Aorta (tissue), 5 donors: ENCODE measurements at regions of chr2 and their contacts with region 1.

Region 1: DNA sequence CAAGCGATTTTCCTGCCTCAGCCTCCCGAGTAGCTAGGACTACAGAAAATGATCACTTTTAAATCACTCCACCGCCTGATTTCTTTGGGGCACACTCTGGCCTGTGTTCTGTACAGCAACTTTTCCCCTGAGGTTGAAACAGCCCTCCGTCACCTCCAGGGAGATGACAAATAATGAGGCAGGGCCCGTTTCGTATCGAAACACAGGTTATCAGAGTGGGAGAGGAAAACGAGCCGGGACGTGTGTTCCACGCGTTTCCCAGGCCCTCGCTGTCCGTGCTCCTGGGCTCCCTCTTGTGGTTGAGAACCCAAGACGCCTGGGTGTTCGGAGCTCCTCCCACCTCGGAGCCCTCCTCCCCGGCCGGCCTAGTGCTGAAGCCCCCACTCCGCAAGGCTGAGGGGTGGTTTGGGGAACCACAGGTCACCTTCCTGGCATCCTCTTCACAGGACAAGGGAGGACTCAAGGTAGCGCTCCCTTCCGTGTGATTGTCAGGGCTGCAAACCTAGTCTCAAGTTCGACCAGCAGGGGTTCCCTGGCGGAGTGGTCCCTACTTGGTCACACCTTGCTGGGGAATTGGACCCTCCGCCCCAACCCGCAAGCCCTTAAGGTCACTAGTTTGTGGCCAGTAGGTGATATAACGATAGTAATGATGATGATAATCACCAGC is 12.8 kb downstream of the ATP6V1B1 start:
- DNase-seq: peak; percentile 85 to 93
- ATAC-seq: peak; percentile 92
- H3K4me3 ChIP-seq: no peak overlapping the region
- H3K27ac ChIP-seq: no peak overlapping the region
- H3K4me1 ChIP-seq: no peaks in the 10 kb centered on the region
- H3K27me3 ChIP-seq: no peaks in the 10 kb centered on the region

Region 2: GRCh38 chr2:70248181-70248847 is 700.2 kb before region 1 on chr2 and contains the start of gene TIA1:
- intact Hi-C with region 1: no loop called
- DNase-seq: peak; percentile 99
- ATAC-seq: peak; percentile 99
- H3K4me3 ChIP-seq: peak within 1 kb of the TSS; percentile 86
- H3K27ac ChIP-seq: peak within 1 kb of the TSS; percentile 91 to 93
- H3K4me1 ChIP-seq: peaks cover 0 to 5% of the 10 kb centered on the region in 2 donors
- H3K27me3 ChIP-seq: no peaks in the 10 kb centered on the region
- total RNA-seq, gene TIA1: 87.6 to 150 TPM

Region 3: GRCh38 chr2:70301344-70302194 is 646.9 kb before region 1 on chr2 and contains the start of gene FAM136A:
- intact Hi-C with region 1: loop called in 1 of 2 experiments (anchors 5 kb)
- DNase-seq: peak; percentile 92 to 97
- ATAC-seq: peak; percentile 98
- H3K4me3 ChIP-seq: peak within 1 kb of the TSS; percentile 68 to 70
- H3K27ac ChIP-seq: peak within 1 kb of the TSS in 1 of 2 donors; percentile 1
- H3K4me1 ChIP-seq: no peaks in the 10 kb centered on the region
- H3K27me3 ChIP-seq: no peaks in the 10 kb centered on the region
- total RNA-seq, gene FAM136A: 15.7 to 19.8 TPM

Region 4: GRCh38 chr2:70541481-70542020 is 406.9 kb before region 1 on chr2:
- intact Hi-C with region 1: no loop called
- DNase-seq: no peak
- ATAC-seq: no peak
- H3K4me3 ChIP-seq: no peak overlapping the region
- H3K27ac ChIP-seq: no peak overlapping the region
- H3K4me1 ChIP-seq: no peaks in the 10 kb centered on the region
- H3K27me3 ChIP-seq: no peaks in the 10 kb centered on the region

Region 5: GRCh38 chr2:70861777-70862625 is 86.5 kb before region 1 on chr2:
- intact Hi-C with region 1: loop called in 1 of 2 experiments (anchors 2 kb)
- DNase-seq: peak; percentile 82 to 91
- ATAC-seq: peak; percentile 85
- H3K4me3 ChIP-seq: no peak overlapping the region
- H3K27ac ChIP-seq: no peak overlapping the region
- H3K4me1 ChIP-seq: no peaks in the 10 kb centered on the region
- H3K27me3 ChIP-seq: no peaks in the 10 kb centered on the region

Region 6: DNA sequence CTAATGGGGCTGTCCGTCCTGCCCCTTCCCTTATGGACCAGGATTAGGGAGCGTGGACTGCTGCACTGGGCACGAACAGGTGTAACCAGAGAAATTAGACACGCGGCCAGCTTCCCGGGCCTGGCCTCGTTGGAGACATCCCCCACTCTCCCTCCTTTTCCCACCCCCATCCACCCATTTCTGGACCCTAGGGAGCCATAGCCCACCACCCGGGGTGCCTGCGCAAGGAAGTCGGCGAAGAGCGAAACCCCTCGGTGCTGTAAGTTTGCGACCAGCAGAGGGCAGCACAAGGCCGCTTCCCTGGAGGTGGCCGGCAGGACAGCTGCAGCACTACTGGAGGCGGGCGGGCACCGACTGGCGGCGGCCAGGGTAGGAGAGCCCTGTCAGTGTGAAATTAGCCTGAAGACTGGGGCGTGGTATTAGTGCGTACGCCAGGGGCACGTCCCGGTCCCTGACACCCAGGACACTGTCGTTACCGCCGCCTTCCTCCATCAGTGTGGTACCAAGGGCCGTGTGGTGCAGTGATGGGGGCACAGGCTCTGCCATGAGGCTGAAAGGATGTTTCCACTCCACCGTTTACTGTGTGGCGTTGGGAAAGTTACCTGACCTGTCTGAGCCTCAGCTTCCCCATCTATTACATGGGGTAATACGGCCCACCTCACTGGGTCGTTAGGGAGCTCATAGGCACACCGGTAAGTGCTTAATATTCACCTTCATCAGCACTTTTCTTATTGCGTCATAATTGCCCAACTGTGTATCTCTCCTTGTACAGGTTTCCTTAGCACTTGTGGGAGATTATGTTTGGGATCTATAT is 76.9 kb before region 1 on chr2:
- intact Hi-C with region 1: loop called (anchors 1 to 2 kb)
- DNase-seq: peak; percentile 92 to 97
- ATAC-seq: peak; percentile 93
- H3K4me3 ChIP-seq: no peak overlapping the region
- H3K27ac ChIP-seq: no peak overlapping the region
- H3K4me1 ChIP-seq: no peaks in the 10 kb centered on the region
- H3K27me3 ChIP-seq: no peaks in the 10 kb centered on the region